AG04449 (cell line): ENCODE measurements at regions of chr15 and their contacts with region 1.

Region 1: GRCh38 chr15:55897560-55898336 is 95.7 kb downstream of the NEDD4 start:
- DNase-seq: no peak
- H3K4me3 ChIP-seq: no peak overlapping the region
- CTCF ChIP-seq: peak; percentile 76

Region 2: DNA sequence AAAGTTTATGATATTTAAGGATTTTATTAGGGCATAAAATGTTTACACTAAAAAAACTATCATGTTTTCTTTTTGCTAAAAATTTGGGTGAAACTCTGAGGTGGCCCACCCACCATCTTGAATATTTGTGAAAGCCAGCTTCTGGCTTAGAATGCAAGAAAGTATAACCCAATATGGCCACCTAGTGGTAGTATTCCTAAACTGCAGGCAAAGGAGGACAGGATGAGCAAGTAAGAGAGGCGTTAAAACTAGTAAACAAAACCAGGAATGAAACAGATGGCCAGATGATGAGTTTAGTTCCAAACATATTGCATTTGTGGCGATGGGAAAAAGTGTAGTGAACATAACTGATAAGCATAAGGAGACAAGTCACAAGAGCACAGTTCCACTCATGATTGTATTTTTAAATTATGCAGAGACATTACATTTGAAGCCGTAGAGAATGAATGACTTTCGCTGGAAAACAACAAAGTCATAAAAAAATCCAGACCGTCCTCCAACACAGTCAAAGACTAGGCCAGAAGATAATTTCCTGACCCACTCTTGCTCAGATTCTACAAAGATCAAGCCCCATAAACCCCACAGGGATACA is 51.5 kb before region 1 on chr15:
- CTCF ChIA-PET with region 1: interaction called, 12 read pairs
- POLR2A ChIA-PET with region 1: no interaction called
- DNase-seq: peak; percentile 40
- H3K4me3 ChIP-seq: no peak overlapping the region
- CTCF ChIP-seq: peak; percentile 66

Region 3: GRCh38 chr15:55873024-55873745 is 24.6 kb before region 1 on chr15:
- CTCF ChIA-PET with region 1: interaction called, 13 read pairs
- POLR2A ChIA-PET with region 1: no interaction called
- DNase-seq: no peak
- H3K4me3 ChIP-seq: no peak overlapping the region
- CTCF ChIP-seq: no peak

Region 4: GRCh38 chr15:55884223-55884622 is 13.5 kb before region 1 on chr15:
- CTCF ChIA-PET with region 1: interaction called, 12 read pairs
- POLR2A ChIA-PET with region 1: no interaction called
- DNase-seq: no peak
- H3K4me3 ChIP-seq: no peak overlapping the region
- CTCF ChIP-seq: no peak